ENCODE measurements at regions of chr12 and their contacts with region 1.

Region 1: DNA sequence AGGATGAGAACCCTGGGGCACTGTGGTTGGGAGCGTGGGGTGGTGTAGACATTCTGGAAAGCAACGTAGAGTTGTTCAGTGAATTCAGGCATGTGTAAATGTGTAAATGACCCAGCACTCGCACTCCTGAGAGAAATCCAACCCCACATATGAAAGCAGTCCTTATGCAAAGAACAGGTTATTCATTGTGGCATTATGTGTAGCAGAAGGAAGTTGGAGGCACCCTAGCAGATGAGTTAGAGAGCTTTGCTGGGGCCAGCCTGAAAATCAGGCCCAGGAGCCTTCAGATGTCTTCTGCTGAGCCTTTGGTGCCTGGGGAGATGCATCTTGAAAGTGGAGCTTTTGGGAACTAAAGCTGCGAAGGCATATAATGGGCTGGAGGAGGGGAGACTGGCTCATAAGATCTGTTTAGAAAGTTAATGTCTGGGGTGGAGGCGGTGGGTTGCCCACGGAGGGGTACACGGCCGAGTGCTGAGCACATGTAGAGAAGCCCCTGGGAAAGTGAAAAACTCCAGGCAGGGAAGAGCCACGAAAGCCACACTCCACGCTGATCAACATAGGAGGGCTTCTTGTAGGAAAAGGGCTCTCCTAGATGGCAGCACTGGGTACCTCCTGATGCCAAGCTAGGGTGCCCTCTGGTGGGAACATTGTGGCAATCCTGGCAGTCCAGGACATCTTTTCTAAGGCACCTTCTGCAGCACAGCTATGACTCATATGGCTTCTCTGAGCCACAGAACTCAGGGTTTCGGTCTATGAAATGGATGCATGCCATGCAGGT is 6.0 kb upstream of the KRT83 start:
- DNase-seq: peak; percentile 74
- ATAC-seq: peak; percentile 74

Region 2: DNA sequence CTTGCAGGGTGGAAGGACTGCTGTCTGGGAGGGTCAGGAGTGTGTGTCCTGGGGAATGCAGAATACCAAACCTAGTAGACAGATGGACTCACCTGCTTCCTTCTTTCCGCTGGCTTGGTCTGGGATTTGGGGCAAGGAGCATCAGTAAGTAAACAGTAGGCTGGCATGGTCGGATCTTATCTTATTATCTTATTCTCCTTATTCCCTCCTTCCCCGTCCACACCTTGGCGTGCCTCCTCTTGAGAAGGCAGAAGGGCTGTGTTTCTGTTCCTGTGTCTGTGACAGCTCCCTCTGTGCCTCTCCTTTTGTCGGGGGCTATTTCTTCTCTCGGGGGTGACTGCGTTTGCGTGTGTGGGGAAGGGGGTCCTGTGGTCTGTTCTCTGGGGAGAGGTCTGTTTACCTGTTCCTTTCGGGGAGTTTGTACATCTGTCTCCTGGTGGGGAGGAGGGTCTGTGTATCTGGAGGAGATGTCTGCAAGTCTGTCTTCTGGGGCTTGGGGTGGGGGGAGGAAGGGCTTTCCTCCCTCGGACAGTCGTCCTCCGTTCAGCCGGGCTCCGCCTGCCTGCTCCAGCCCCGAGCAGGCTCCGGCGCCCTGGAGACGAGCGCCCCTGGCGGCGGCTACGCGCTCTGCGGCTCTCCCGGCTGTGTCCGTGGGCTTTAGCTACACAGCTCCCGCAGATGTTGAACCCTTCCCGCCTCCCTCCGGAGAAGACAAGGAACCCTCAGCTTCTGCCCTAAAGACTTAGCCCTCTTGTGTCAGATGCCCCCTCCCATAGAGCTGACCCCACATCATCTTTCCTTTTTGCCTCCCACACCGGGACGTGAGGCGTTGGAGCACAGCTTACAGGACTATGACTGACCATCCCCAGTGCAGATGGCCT is 48.5 kb before region 1 on chr12:
- intact Hi-C with region 1: loop called (anchors 1 kb)
- DNase-seq: peak; percentile 88
- ATAC-seq: peak; percentile 82

Region 3: DNA sequence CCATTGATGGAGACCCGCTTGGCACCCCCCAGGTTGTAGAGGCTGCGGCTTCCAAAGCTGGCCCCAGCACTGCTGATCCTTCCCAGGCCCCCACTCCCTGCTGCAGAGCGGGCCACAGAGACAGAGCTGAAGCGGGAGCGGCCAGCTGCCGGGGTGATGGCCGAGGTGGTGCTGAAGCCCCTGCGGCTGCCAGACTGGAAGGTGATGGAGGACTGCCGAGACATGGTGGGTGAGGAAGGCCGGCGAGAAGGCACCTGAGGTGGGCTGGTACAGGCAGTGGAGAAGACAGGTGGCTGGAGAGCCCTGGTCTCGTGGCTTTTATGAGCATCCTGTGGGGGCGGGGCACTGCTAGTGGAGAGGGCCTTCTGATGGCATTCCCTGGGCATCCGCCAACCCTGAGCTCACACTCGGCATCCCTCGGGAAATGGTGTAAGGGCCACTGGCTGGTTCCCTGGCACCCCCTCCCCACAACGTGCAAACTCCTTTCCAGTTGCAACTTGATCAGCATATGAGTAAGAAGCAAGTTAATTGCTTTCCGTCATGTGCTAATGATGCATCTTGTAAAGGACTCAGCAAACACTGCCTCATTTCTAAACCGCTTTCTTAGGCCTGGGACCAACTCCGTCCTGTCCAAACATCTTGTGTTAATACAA is 107.0 kb after region 1 on chr12 and contains the start of gene KRT75:
- intact Hi-C with region 1: no loop called
- DNase-seq: no peak
- ATAC-seq: peak; percentile 13
- total RNA-seq, gene KRT75: not detected

Region 4: DNA sequence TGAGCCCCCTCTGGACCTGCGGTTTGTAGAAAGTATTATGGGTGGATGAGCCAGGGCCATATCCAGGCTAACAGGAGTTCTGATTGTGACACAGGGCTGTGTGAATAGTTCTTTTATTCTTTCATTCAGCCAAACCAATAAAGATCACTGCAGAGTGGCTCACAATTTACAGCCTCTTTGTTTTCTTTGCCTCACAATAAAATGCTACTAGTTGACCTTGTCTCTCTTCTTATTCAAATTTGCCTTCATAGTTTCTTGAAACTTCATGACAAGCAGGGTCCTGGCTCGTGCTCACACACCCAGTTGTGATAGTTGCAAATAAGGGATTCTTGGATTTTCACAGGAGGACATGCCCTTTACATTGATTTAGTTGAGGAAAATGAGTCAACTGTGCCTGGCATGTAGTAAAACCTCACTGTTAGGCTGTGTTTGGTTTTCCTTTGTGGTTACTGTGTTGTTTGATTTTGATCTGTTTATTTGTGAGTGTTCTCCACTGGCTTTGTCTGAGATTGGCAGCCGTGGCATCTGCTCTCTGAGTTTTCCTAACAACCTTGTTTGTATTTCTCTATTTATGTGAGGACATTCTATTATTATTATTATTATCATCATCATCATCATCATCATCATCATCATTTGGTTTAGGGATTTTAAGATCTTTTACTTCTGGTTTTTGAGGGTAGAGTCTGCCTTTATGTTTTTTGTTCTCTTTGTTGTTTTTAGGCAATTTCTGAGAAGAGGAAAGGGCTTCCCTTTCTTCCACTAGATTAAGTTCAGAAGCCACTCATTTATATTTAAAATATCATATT is 127.4 kb after region 1 on chr12:
- intact Hi-C with region 1: no loop called
- DNase-seq: no peak
- ATAC-seq: peak; percentile 55

Measured in sciatic nerve (tissue), 2 donors.